ENCODE measurements at regions of chr20 and their contacts with region 1.

Region 1: DNA sequence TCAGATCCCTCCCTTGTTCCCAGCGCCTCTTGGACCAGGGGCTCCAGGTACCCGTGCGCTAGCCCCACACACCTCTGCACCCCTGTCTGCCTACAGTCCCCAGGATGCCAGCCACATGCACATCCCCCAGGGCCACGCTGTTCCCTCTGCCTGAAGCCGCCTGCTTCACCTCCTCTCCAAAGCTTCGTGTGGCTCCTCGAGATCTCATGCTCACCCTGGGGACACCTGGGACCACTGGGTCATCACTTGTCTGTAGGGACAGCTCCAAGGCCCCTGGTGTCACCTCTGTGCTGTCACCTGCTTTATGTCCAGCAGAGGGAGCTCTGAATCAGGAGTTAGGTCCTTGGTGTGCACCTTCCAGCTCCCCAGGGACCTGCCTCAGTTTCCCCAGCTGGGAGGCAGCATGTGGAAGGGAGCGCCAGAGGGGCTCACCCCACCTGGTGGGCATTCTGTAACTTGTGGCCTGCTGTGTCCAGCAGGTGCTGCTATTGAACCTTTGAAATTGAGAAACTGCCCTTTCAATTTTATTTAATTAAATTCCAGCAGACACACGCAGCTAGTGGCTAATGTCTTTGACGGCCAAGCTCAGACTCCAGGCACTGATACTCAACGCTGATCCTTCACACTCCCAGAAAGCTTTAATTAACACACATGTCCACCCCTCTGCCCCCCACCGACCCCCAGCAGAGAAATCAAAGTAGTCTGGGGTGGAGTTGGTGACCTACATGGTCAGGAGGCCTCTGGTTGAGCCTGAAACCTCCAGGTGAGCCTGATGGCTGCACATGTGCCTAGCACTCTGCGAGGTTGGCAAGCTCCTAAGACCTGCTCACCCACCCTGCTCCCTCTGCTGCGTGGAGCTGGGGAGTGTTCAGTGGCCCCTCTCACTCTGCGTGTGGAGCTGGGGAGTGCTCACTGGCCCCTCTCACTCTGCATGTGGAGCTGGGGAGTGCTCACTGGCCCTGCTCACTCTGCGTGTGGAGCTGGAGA is 7.6 kb upstream of the YTHDF1 start:
- DNase-seq: no peak
- ATAC-seq: peak; percentile 78
- H3K4me3 ChIP-seq: no peak overlapping the region
- H3K27ac ChIP-seq: no peak overlapping the region
- H3K4me1 ChIP-seq: peaks cover 15 to 29% of the 10 kb centered on the region in 2 experiments
- H3K27me3 ChIP-seq: no peaks in the 10 kb centered on the region
- CTCF ChIP-seq: peak; percentile 86 to 95 (median 88)
- POLR2A ChIP-seq: no peak
- RAD21 ChIP-seq: peak; percentile 96

Region 2: DNA sequence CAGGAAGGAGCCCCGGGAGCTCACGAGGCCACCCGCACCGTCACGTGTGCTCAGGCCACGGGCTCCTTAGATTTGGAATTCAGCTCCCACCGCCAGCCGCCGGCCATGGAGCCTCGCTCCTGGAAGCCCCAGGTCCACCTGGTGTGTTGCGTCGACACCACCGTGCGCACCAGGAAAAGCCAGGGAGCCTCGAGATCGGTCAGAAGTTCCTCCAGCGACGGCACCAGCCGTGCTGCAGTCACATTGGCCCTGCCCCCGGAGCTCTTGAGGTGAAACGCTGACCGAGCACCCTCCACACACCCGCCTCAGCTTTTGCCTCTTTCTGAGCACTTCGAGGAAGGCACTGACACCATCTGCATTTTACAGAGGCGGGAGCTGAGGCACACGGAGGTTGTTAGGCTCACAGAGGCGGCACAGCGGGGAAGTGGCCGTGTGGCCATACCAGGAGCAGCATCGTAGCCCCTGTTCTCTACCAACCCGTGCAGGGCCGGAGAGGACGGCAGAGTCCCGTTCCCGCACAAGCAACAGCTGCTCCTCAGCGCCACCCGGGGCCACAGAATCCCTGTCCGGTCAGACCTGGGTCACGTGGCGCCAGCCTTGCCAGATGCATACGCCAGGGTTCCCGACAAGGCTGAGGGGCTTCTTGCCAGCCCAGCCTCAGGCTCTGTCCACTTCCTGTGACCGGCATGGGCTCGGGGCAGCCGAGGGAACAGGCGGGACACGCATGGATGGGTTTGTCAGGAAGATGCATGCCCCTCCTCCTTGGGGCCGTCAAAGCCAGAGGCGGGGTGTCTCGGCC is 23.2 kb after region 1 on chr20:
- CTCF ChIA-PET with region 1: interaction called, 23 read pairs
- POLR2A ChIA-PET with region 1: no interaction called
- RAD21 ChIA-PET with region 1: interaction called, 7 read pairs
- intact Hi-C with region 1: loop called (anchors 1 kb)
- DNase-seq: no peak
- ATAC-seq: peak; percentile 35; the same call in 1 of the 2 replicates
- H3K4me3 ChIP-seq: no peak overlapping the region
- H3K27ac ChIP-seq: no peak overlapping the region
- H3K4me1 ChIP-seq: no peaks in the 10 kb centered on the region
- H3K27me3 ChIP-seq: no peaks in the 10 kb centered on the region
- CTCF ChIP-seq: no peak
- POLR2A ChIP-seq: no peak
- RAD21 ChIP-seq: no peak

Region 3: GRCh38 chr20:63253438-63254236 is 30.1 kb after region 1 on chr20:
- CTCF ChIA-PET with region 1: interaction called, 23 read pairs
- POLR2A ChIA-PET with region 1: interaction called, 5 read pairs
- RAD21 ChIA-PET with region 1: interaction called, 7 read pairs
- intact Hi-C with region 1: loop called (anchors 1 kb)
- DNase-seq: no peak
- ATAC-seq: no peak
- H3K4me3 ChIP-seq: no peak overlapping the region
- H3K27ac ChIP-seq: no peak overlapping the region
- H3K4me1 ChIP-seq: no peaks in the 10 kb centered on the region
- H3K27me3 ChIP-seq: no peaks in the 10 kb centered on the region
- CTCF ChIP-seq: no peak
- POLR2A ChIP-seq: no peak
- RAD21 ChIP-seq: no peak

Region 4: GRCh38 chr20:63272584-63273579 is 49.4 kb after region 1 on chr20 and contains the start of gene ARFGAP1:
- CTCF ChIA-PET with region 1: interaction called, 16 read pairs
- POLR2A ChIA-PET with region 1: interaction called, 6 read pairs
- RAD21 ChIA-PET with region 1: interaction called in 1 of 2 experiments, 3 read pairs
- intact Hi-C with region 1: no loop called
- DNase-seq: peak; percentile 61
- ATAC-seq: peak; percentile 93
- H3K4me3 ChIP-seq: peak within 1 kb of the TSS; percentile 98 to 99
- H3K27ac ChIP-seq: peak within 1 kb of the TSS; percentile 72
- H3K4me1 ChIP-seq: peaks cover 10 to 30% of the 10 kb centered on the region in 2 experiments
- H3K27me3 ChIP-seq: no peaks in the 10 kb centered on the region
- CTCF ChIP-seq: no peak
- POLR2A ChIP-seq: peak; percentile 38
- RAD21 ChIP-seq: no peak
- total RNA-seq, gene ARFGAP1: 94.4 TPM

Region 5: DNA sequence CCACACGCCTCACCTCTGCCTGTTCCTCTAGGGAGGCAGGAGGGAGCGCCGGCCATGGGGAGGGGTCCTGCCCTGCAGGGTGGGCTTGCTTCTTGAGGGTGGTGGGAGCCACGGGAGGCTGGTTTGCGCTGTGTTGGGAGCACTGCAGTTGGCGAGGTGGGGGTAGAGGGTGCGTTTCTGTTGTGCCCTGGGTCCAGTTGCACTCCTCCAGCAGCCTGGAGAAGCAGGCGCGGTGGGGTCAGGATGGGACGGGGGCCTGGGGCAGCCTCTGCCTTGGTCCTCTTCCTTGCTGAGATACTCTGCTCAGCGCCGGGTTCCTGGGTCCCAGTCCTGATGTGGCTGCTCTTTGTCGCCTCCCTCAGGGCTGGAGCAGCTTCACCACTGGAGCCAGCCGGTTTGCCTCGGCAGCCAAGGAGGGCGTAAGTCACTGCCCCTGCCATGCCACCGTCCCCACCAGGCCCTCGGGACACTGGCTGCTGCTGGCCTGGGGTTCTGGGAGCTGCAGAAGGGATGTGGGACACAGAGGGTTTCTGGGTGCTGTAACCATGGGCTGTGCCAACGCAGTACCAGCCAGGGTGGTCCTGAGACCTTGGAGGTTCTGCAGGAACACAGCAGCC is 57.5 kb after region 1 on chr20:
- CTCF ChIA-PET with region 1: interaction called, 10 read pairs
- POLR2A ChIA-PET with region 1: no interaction called
- RAD21 ChIA-PET with region 1: interaction called in 1 of 2 experiments, 3 read pairs
- intact Hi-C with region 1: no loop called
- DNase-seq: no peak
- ATAC-seq: peak; percentile 80
- H3K4me3 ChIP-seq: no peak overlapping the region
- H3K27ac ChIP-seq: no peak overlapping the region
- H3K4me1 ChIP-seq: no peaks in the 10 kb centered on the region
- H3K27me3 ChIP-seq: no peaks in the 10 kb centered on the region
- CTCF ChIP-seq: peak in 2 of 3 experiments; percentile 55 to 56; a peak in 3 of 6 replicates
- POLR2A ChIP-seq: no peak
- RAD21 ChIP-seq: no peak

Region 6: DNA sequence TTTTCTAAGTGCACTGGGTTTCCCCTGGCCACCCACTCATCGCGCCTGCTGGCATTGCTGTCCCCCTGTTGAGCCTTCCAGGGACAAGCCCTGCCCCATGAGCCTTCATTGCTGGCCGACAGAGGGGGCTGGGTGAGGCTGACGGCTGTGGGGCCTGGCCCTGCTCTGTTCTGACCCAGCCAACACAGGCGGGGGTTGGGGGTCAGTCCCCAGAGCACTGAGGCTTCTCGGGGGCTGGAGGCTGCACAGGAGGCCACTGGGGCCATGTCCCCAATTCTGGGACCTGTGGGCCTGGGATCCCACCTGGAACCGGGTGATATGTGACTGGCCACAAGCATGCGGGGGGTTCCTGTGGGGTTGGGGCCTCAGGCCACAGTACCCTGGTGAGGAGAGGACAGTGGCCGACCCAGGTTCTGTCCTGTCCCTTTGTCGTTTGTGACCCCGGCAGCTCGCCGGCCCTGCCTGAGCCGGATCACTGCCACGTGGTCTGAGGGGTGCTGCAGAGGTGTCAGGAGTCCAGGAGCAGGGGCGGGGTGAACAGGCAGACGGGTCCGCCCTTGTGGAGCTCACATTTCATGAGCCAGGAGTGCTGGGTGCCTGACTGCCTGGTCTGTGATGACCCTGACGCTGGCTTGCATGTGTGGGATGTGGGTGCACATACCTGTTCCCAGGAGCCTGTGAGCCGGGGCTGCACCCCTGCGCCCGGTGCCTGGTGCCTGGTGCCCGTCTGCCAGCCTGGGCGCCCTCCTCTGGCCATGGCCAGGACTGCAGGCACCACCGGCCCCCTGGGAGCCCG is 67.4 kb after region 1 on chr20:
- CTCF ChIA-PET with region 1: interaction called, 19 read pairs
- POLR2A ChIA-PET with region 1: no interaction called
- RAD21 ChIA-PET with region 1: interaction called in 1 of 2 experiments, 4 read pairs
- intact Hi-C with region 1: loop called (anchors 2 kb)
- DNase-seq: peak; percentile 13
- ATAC-seq: peak; percentile 84
- H3K4me3 ChIP-seq: no peak overlapping the region
- H3K27ac ChIP-seq: no peak overlapping the region; the same call in 1 of the 2 replicates
- H3K4me1 ChIP-seq: peaks cover 4 to 18% of the 10 kb centered on the region in 2 experiments; a peak in 3 of 4 replicates
- H3K27me3 ChIP-seq: no peaks in the 10 kb centered on the region
- CTCF ChIP-seq: peak; percentile 50 to 84 (median 62); a peak in 5 of 6 replicates
- POLR2A ChIP-seq: no peak
- RAD21 ChIP-seq: peak; percentile 57

Region 7: GRCh38 chr20:63381807-63382322 is 158.4 kb after region 1 on chr20:
- CTCF ChIA-PET with region 1: interaction called, 28 read pairs
- POLR2A ChIA-PET with region 1: no interaction called
- RAD21 ChIA-PET with region 1: no interaction called
- intact Hi-C with region 1: no loop called
- DNase-seq: no peak
- ATAC-seq: peak; percentile 74
- H3K4me3 ChIP-seq: no peak overlapping the region
- H3K27ac ChIP-seq: no peak overlapping the region
- H3K4me1 ChIP-seq: no peaks in the 10 kb centered on the region
- H3K27me3 ChIP-seq: no peaks in the 10 kb centered on the region
- CTCF ChIP-seq: peak; percentile 87 to 98 (median 97)
- POLR2A ChIP-seq: no peak
- RAD21 ChIP-seq: peak; percentile 90